Stomach (tissue), 19 donors: ENCODE measurements at regions of chr12 and their contacts with region 1.

Region 1: DNA sequence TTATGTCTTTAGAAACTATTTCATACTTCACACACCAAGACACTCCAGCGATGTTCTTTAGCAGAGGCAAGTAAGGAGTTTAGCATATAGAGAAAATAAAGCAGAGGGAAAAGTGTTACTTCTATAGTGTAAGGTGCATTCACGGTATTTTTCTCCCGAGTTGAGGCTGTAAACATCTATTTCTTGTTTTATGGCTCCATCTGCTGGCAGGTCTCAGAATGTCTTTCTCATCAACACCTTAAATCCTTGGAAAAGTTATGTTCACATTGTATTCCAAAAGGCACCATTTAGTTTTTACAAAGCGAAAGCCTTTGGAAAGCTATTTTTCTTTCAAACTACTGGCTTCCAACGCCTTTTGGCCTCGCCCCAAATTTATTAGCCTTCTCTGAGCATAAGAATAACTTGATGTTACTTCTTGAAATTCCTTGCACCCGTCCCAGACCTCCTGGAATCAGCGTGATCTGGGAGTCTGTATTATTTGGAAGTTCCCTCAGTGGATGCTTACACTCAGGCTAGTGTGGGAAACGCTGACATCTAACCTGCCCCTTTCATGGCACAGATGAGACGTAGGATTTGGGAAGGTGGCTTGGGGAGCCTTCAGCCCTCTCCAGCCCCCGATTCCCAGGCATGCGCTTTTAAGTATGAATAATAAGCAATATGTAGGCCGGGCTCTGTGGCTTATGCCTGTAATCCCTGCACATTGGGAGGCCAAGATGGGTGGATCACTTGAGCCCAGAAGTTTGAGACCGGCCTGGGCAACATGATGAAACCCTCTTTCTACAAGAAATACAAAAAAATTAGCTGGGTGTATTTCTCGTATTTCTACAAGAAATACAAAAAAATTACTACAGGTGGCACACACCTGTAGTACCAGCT is 1.9 kb upstream of the PIWIL1 start:
- DNase-seq: peak in 1 of 2 donors; percentile 87
- H3K4me3 ChIP-seq: no peak overlapping the region
- H3K27ac ChIP-seq: no peak overlapping the region
- H3K4me1 ChIP-seq: peaks cover 0 to 14% (median 9%) of the 10 kb centered on the region in 4 donors
- H3K27me3 ChIP-seq: peaks cover 9 to 78% (median 16%) of the 10 kb centered on the region in 3 donors
- CTCF ChIP-seq: peak in 5 of 7 experiments; percentile 33 to 61 (median 46)
- EP300 ChIP-seq: no peak
- POLR2A ChIP-seq: no peak

Region 2: GRCh38 chr12:130044991-130045621 is 290.6 kb before region 1 on chr12:
- intact Hi-C with region 1: loop called (anchors 5 kb)
- DNase-seq: peak in 1 of 2 donors; percentile 61
- H3K4me3 ChIP-seq: no peak overlapping the region
- H3K27ac ChIP-seq: no peak overlapping the region
- H3K4me1 ChIP-seq: peaks cover 0 to 5% (median 0%) of the 10 kb centered on the region in 4 donors
- H3K27me3 ChIP-seq: peaks cover 12 to 92% (median 30%) of the 10 kb centered on the region in 3 donors
- CTCF ChIP-seq: no peak
- EP300 ChIP-seq: no peak
- POLR2A ChIP-seq: no peak